B cell (primary cell): ENCODE measurements at regions of chr2 and their contacts with region 1.

Region 1: GRCh38 chr2:46535360-46535759 is 56.0 kb downstream of the TMEM247 start:
- DNase-seq: peak; percentile 62
- ATAC-seq: peak; percentile 78
- H3K4me3 ChIP-seq: peak overlapping the region in 1 of 5 experiments; percentile 37
- H3K4me3 Mint-ChIP-seq: peak overlapping the region; percentile 86
- H3K27ac ChIP-seq: peak overlapping the region; percentile 68 to 77
- H3K27ac Mint-ChIP-seq: peak overlapping the region; percentile 89
- H3K4me1 ChIP-seq: peaks cover 46 to 51% of the 10 kb centered on the region in 2 donors
- H3K4me1 Mint-ChIP-seq: peaks cover 55% of the 10 kb centered on the region
- H3K27me3 ChIP-seq: no peaks in the 10 kb centered on the region
- H3K27me3 Mint-ChIP-seq: no peaks in the 10 kb centered on the region
- CTCF ChIP-seq: no peak

Region 2: GRCh38 chr2:46461011-46461674 is 74.2 kb before region 1 on chr2:
- CTCF ChIA-PET with region 1: interaction called, 5 read pairs
- POLR2A ChIA-PET with region 1: no interaction called
- intact Hi-C with region 1: loop called (anchors 2 kb)
- DNase-seq: peak; percentile 82
- ATAC-seq: peak; percentile 79
- H3K4me3 ChIP-seq: peak overlapping the region in 3 of 5 experiments; percentile 16 to 24 (median 20)
- H3K4me3 Mint-ChIP-seq: peak overlapping the region; percentile 70
- H3K27ac ChIP-seq: peak overlapping the region; percentile 2 to 55
- H3K27ac Mint-ChIP-seq: peak overlapping the region; percentile 77
- H3K4me1 ChIP-seq: peaks cover 13 to 21% of the 10 kb centered on the region in 2 donors
- H3K4me1 Mint-ChIP-seq: peaks cover 21% of the 10 kb centered on the region
- H3K27me3 ChIP-seq: no peaks in the 10 kb centered on the region
- H3K27me3 Mint-ChIP-seq: peaks cover 7% of the 10 kb centered on the region
- CTCF ChIP-seq: peak; percentile 98